ENCODE measurements at regions of chr7 and their contacts with region 1.

Region 1: DNA sequence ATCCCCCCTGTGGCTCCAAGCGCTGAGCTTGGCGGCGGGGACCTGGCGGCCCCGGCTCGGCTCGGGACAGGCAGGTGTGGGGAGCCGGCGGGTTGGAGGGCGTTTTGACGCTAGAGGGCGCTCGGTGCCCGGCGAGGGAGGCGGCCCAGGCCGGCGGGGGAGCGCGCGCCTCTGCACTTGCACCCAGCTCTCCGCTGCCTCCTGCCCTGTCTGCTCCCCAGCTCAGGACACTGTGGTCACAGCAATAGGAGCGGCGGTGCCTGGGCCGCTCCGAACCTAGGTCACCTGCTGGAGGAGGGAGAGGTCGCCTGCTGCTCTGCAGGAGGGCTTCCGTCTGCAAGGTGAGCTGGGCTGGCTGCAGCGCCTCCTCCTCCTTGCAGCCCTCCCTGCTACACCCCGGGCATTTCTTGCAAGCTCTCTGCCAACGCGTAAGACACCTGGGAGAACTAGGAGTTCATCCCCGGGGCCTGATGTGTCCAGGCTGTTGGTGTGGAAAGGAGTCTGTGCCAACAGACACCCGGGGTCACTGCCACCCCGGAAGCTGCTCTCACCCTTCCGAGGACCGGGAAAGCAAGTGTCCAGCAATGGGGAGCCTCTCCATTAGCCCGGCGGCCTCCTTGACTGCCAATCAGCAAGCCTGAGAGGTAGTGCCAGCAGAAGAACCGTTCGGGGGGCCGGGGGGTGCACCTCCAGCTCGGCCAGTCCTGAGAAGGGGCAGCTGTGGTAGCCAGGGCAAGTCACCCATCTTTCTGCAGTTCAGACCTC is 620.4 kb downstream of the GALNT17 start:
- DNase-seq: peak; percentile 19 to 59
- ATAC-seq: peak; percentile 67 to 88 (median 72)
- H3K4me3 ChIP-seq: no peak overlapping the region
- H3K27ac ChIP-seq: no peak overlapping the region
- H3K4me1 ChIP-seq: peaks cover 0 to 6% (median 0%) of the 10 kb centered on the region in 9 donors
- H3K27me3 ChIP-seq: peaks cover 0 to 45% (median 32%) of the 10 kb centered on the region in 7 donors
- CTCF ChIP-seq: peak; percentile 28 to 73 (median 63)

Region 2: GRCh38 chr7:72493850-72494661 is 741.7 kb after region 1 on chr7:
- intact Hi-C with region 1: loop called in 5 of 10 experiments (anchors 5 to 10 kb)
- DNase-seq: peak; percentile 31 to 56
- ATAC-seq: peak in 1 of 8 donors; percentile 58
- H3K4me3 ChIP-seq: no peak overlapping the region
- H3K27ac ChIP-seq: no peak overlapping the region
- H3K4me1 ChIP-seq: peaks cover 0 to 13% (median 0%) of the 10 kb centered on the region in 9 donors
- H3K27me3 ChIP-seq: no peaks in the 10 kb centered on the region
- CTCF ChIP-seq: peak; percentile 39 to 75 (median 71)

Region 3: GRCh38 chr7:72504061-72504706 is 751.8 kb after region 1 on chr7:
- intact Hi-C with region 1: loop called in 2 of 10 experiments (anchors 10 kb)
- DNase-seq: no peak
- ATAC-seq: no peak
- H3K4me3 ChIP-seq: no peak overlapping the region
- H3K27ac ChIP-seq: no peak overlapping the region
- H3K4me1 ChIP-seq: no peaks in the 10 kb centered on the region
- H3K27me3 ChIP-seq: no peaks in the 10 kb centered on the region
- CTCF ChIP-seq: no peak

Measured in heart right ventricle (tissue), 16 donors.